Left lung (tissue), 14 donors: ENCODE measurements at regions of chr2 and their contacts with region 1.

Region 1: GRCh38 chr2:16608661-16609643 is 56.7 kb downstream of the CYRIA start:
- DNase-seq: peak; percentile 75 to 92 (median 84)
- ATAC-seq: peak; percentile 99
- H3K4me3 ChIP-seq: peak overlapping the region; percentile 30 to 35
- H3K27ac ChIP-seq: peak overlapping the region; percentile 28 to 51
- H3K4me1 ChIP-seq: peaks cover 5 to 30% of the 10 kb centered on the region in 2 donors
- H3K27me3 ChIP-seq: no peaks in the 10 kb centered on the region
- CTCF ChIP-seq: peak; percentile 93 to 97

Region 2: GRCh38 chr2:15939854-15940660 is 668.9 kb before region 1 on chr2 and contains the start of gene MYCN:
- intact Hi-C with region 1: loop called in 1 of 2 experiments (anchors 10 kb)
- DNase-seq: peak in 2 of 4 donors; percentile 61 to 83
- ATAC-seq: peak; percentile 39
- H3K4me3 ChIP-seq: peak within 1 kb of the TSS; percentile 31 to 33
- H3K27ac ChIP-seq: no peak within 1 kb of the TSS
- H3K4me1 ChIP-seq: peaks cover 23 to 50% of the 10 kb centered on the region in 2 donors
- H3K27me3 ChIP-seq: peaks cover 35 to 75% of the 10 kb centered on the region in 2 donors
- CTCF ChIP-seq: peak in 1 of 2 donors; percentile 72
- polyA plus RNA-seq, gene MYCN: 13.5 to 22.2 (median 18.6) TPM

Region 3: DNA sequence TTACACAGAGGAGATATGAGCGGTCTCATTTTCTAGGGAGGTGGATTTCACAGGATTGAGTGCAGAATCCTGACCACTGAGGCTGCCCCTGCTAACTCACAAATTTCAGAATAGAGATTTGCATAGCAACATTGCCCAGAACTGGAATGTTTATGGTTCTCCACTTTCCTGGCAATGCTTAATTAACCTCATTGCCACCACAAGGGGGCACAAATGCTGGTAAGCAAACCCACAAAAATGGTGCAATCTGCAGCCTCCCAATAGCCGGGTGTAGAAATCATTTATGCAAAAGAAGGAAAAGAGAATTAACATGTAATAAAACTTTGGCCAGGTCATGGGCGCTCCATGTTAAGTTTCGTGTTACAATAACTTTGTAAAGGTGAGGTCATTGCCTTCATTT is 55.7 kb before region 1 on chr2:
- intact Hi-C with region 1: loop called in 1 of 2 experiments (anchors 10 kb)
- DNase-seq: peak in 3 of 4 donors; percentile 16 to 45 (median 34)
- ATAC-seq: peak; percentile 76
- H3K4me3 ChIP-seq: no peak overlapping the region
- H3K27ac ChIP-seq: no peak overlapping the region
- H3K4me1 ChIP-seq: no peaks in the 10 kb centered on the region
- H3K27me3 ChIP-seq: no peaks in the 10 kb centered on the region
- CTCF ChIP-seq: peak; percentile 50 to 56

Region 4: GRCh38 chr2:16727256-16727655 is 118.3 kb after region 1 on chr2:
- intact Hi-C with region 1: loop called in 1 of 2 experiments (anchors 10 kb)
- DNase-seq: no peak
- ATAC-seq: peak; percentile 54
- H3K4me3 ChIP-seq: no peak overlapping the region
- H3K27ac ChIP-seq: no peak overlapping the region
- H3K4me1 ChIP-seq: no peaks in the 10 kb centered on the region
- H3K27me3 ChIP-seq: no peaks in the 10 kb centered on the region
- CTCF ChIP-seq: no peak

Region 5: GRCh38 chr2:16756831-16757644 is 148.1 kb after region 1 on chr2:
- intact Hi-C with region 1: loop called in 1 of 2 experiments (anchors 5 kb)
- DNase-seq: peak; percentile 73 to 92 (median 80)
- ATAC-seq: peak; percentile 98
- H3K4me3 ChIP-seq: no peak overlapping the region
- H3K27ac ChIP-seq: no peak overlapping the region
- H3K4me1 ChIP-seq: peaks cover 0 to 14% of the 10 kb centered on the region in 2 donors
- H3K27me3 ChIP-seq: no peaks in the 10 kb centered on the region
- CTCF ChIP-seq: peak; percentile 88 to 89

Region 6: DNA sequence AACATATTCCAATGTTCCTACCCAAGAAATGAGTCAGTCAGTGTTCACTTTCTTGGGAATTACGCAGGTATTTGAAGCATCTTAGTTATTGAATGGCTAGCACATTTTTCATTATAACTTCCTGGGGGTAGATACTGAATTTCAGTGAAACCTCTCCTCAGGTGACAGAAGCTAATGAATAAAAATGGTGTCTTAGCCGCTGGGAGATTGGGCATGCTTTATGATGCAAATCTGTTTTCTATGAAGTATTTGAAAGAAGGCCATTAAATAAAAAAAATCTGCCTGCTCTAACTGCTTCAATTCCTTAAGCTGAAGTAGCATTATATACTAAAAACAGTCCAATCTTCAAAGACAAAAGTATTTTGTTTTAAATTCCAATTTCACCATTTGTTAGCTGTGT is 189.5 kb after region 1 on chr2:
- intact Hi-C with region 1: no loop called
- DNase-seq: no peak
- ATAC-seq: no peak
- H3K4me3 ChIP-seq: no peak overlapping the region
- H3K27ac ChIP-seq: no peak overlapping the region
- H3K4me1 ChIP-seq: no peaks in the 10 kb centered on the region
- H3K27me3 ChIP-seq: no peaks in the 10 kb centered on the region
- CTCF ChIP-seq: no peak